Sigmoid colon (tissue), 7 donors: ENCODE measurements at regions of chr1 and their contacts with region 1.

Region 1: DNA sequence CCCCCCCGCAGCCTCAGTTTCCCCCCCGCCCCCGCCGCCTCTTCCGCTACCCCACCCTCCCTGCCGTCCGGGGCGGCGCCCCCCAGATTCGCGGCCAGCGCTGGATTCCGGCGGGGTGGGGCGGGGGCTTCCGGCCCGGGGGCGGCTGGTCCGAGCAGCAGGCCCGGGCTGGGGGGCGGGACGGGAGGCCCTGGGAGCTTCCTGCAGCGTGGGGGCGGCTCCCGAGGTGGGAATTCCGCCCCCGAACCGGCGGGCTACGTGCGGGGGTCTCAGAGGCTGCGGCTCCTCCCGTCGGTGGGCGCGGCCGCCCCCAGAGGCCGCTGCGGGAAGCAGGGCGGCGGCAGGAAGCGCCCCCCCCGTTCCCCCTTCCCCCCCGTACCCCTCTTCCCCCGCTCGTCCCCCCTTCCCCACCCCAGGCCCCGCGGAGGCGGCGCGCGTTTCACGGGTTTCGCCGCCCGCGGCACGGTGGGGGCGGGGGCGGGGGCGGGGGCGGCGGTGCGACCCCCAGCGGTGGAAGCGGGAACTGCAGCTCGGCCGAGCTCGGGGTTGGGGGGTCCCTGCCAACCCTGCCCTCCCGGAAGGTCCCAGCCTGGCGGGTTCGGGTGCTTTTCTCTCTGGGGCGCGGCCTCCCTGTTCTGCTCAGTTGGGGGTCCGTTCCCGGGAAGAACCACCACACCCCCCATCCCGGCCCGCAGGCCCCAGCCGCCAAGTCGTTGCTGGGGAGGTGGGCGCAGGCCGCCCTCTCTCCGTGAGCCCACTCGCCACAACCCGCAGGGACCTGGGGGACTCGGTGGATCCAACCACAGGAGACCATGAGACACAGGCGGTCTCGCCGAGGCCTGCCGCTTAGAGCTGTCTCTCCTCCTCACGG is 76.3 kb downstream of the MORN1 start:
- DNase-seq: peak; percentile 88
- H3K4me3 ChIP-seq: peak overlapping the region; percentile 41 to 78 (median 68)
- H3K27ac ChIP-seq: peak overlapping the region; percentile 91 to 96 (median 93)
- H3K4me1 ChIP-seq: peaks cover 0 to 91% (median 75%) of the 10 kb centered on the region in 4 donors
- H3K27me3 ChIP-seq: no peaks in the 10 kb centered on the region
- CTCF ChIP-seq: peak; percentile 58 to 100 (median 78)
- EP300 ChIP-seq: no peak
- POLR2A ChIP-seq: no peak

Region 2: DNA sequence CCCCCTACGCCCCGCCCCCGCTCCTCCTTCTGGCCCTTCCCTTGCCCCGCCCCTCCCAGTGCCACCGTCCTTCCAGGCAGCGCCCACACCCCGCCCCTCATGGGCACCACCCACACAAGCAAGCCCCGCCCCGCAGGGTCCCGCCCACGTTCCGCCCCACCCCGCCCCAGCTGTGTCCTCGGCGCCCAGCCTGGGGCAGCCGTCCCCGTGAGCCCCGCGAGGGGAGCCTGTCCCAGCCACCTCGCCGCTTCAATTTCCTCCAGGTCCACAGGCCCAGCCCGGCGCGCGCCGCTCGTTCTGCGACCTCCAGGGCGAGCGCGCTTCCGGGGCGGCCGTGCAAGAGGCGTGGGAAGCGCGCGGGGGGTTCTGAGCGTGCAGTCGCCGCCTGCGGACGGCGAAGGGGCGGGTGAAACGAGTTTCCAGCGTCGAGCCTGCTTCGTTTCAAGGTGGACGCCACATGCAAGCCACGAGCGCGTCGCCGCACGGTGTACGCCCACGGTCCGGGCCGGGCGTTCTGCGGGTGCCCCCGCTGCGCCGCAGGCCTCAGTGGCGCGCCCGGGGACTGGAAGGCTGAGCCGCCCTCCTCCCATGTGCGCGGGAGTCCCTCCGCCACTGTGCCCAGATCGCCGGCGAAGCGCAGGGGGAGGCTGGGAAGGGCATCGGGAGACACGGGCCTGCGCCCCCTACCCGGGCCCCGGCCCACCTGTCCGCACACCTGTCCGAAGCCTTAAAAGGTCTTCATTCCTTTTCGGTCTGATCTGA is 109.7 kb before region 1 on chr1:
- intact Hi-C with region 1: loop called (anchors 2 kb)
- DNase-seq: peak; percentile 99
- H3K4me3 ChIP-seq: peak overlapping the region; percentile 23 to 57 (median 47)
- H3K27ac ChIP-seq: peak overlapping the region; percentile 88 to 94 (median 92)
- H3K4me1 ChIP-seq: peaks cover 0 to 64% (median 49%) of the 10 kb centered on the region in 4 donors
- H3K27me3 ChIP-seq: no peaks in the 10 kb centered on the region
- CTCF ChIP-seq: no peak
- EP300 ChIP-seq: peak in 1 of 4 donors; percentile 23
- POLR2A ChIP-seq: peak in 1 of 2 donors; percentile 39

Region 3: GRCh38 chr1:2227346-2228153 is 87.5 kb before region 1 on chr1:
- intact Hi-C with region 1: loop called (anchors 2 kb)
- DNase-seq: peak; percentile 99
- H3K4me3 ChIP-seq: peak overlapping the region; percentile 72 to 88 (median 86)
- H3K27ac ChIP-seq: peak overlapping the region; percentile 98 to 100 (median 99)
- H3K4me1 ChIP-seq: peaks cover 0 to 42% (median 38%) of the 10 kb centered on the region in 4 donors
- H3K27me3 ChIP-seq: no peaks in the 10 kb centered on the region
- CTCF ChIP-seq: no peak
- EP300 ChIP-seq: no peak
- POLR2A ChIP-seq: peak; percentile 30 to 36

Region 4: DNA sequence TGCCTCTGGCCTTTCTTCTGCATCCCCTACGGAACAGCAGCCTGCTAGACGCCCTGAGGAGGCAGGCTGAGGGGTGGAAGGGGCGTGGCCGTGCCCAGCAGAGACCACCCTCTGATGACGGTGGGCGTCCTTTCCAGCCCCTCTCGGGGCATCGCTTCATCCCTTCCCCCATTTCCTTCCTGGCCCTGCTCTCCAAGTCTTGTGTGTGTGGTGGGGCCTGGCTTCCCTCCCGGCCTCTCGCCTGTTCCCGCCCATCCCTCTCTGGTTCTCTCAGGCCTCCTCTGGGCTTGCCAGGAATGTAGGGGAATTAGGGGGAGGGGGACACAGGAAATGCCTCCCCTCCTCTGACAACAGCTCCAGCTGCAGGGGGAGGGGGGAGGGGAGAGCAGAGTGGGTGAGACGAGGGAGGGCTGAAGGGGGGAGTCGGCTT is 35.8 kb before region 1 on chr1:
- intact Hi-C with region 1: loop called (anchors 5 kb)
- DNase-seq: peak; percentile 86
- H3K4me3 ChIP-seq: peak overlapping the region in 1 of 4 donors; percentile 2
- H3K27ac ChIP-seq: peak overlapping the region; percentile 66 to 81 (median 76)
- H3K4me1 ChIP-seq: peaks cover 0 to 80% (median 78%) of the 10 kb centered on the region in 4 donors
- H3K27me3 ChIP-seq: no peaks in the 10 kb centered on the region
- CTCF ChIP-seq: no peak
- EP300 ChIP-seq: no peak
- POLR2A ChIP-seq: no peak

Region 5: GRCh38 chr1:2381741-2382620 is 66.9 kb after region 1 on chr1:
- intact Hi-C with region 1: loop called (anchors 5 kb)
- DNase-seq: peak; percentile 93
- H3K4me3 ChIP-seq: no peak overlapping the region
- H3K27ac ChIP-seq: peak overlapping the region in 2 of 4 donors; percentile 12 to 26
- H3K4me1 ChIP-seq: peaks cover 0 to 16% (median 11%) of the 10 kb centered on the region in 4 donors
- H3K27me3 ChIP-seq: no peaks in the 10 kb centered on the region
- CTCF ChIP-seq: peak; percentile 93 to 96 (median 95)
- EP300 ChIP-seq: no peak
- POLR2A ChIP-seq: no peak